Heart left ventricle (tissue), 16 donors: ENCODE measurements at regions of chr1 and their contacts with region 1.

Region 1: DNA sequence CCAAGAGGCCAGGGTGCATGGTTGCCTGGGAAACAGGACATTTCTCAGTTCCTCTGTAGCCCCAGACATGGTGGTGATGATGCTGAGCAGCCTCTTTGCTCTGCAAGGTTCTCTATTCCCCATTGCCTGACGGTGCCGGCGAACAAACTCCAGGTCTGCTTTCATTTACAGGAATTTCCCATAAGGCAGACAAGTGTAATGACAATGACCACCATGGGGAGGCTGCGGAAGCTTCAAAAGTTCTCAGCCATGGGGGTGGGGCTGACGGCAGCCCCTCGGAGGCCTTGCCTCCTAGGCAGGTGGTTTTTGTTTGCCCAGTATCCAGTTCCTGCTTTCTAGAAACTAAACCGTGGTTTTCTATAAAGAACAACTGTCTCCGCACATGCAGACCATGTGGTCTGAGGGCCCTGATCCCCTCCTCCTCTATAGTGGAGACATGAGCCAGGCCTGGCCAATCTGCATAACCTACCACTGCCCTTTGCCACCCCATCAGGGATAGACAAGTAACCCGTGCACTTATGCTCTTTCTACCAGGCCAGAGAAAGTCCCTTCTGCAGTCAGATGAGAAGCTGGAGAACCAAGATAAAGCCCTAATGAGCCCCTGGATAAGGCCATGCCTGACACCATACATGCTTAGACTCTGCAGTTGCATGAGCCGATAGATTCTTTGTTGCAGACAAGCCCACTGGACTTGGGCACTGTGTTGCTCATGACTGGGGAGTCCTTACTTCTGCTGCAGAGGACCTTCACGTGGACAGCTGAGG is 54.1 kb downstream of the LDLRAD2 start:
- DNase-seq: no peak
- ATAC-seq: no peak
- H3K4me3 ChIP-seq: no peak overlapping the region
- H3K27ac ChIP-seq: peak overlapping the region in 1 of 12 donors; percentile 24
- H3K4me1 ChIP-seq: peaks cover 0 to 16% (median 13%) of the 10 kb centered on the region in 12 donors
- H3K27me3 ChIP-seq: no peaks in the 10 kb centered on the region
- CTCF ChIP-seq: no peak
- POLR2A ChIP-seq: no peak

Region 2: DNA sequence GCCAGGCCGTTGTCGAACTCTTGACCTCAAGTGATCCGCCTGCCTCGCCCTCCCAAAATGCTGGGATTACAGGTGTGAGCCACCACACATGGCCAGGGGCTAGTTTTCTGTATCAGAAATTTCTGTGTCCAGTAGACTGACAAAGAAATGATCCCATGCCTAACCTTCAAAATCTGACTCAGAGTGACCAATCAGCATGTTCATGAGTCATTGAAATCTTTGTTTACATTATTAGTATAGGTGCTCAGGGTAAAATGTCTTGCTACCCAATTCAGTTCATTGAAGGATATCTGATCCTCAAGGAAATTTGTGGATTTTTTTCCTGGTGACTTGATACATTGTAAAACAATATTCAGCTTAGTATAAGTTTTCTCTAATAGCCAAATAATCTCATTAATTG is 65.0 kb before region 1 on chr1:
- intact Hi-C with region 1: no loop called
- DNase-seq: no peak
- ATAC-seq: no peak
- H3K4me3 ChIP-seq: no peak overlapping the region
- H3K27ac ChIP-seq: no peak overlapping the region
- H3K4me1 ChIP-seq: no peaks in the 10 kb centered on the region
- H3K27me3 ChIP-seq: no peaks in the 10 kb centered on the region
- CTCF ChIP-seq: no peak
- POLR2A ChIP-seq: no peak

Region 3: DNA sequence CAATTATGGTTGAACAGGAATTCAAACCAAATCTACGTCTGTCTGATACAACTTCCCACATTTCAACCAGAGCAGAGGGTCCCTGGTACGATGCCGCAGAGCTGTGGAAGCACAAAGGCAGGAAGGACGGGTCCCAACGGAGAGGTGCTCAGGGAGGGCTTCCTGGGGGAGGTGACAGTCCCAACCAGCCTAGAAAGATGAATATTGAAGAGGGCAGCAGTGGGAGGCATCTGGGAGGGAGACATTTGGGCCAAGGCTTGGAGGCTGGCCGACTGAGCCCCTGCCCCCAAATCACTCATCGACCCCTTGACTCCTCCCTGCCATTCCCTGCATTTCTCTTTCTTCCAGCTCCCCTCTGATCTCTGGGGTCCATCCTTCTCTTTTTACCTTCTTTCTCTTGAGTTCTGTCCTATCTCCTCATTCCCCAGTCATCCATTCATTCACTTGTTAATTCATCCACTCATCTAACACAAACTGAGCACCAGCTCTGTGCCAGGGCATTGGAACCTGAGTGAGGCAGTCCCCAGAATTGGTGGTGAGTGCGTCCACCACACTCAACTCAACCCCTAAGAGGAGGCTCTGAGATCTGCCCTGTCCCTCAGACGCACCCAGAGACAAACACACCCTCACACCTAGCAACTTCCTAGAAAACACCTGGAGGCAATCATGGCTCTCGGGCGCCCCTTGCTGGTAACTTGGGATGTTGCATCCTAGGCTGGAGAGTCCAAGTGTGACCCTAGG is 97.5 kb after region 1 on chr1:
- intact Hi-C with region 1: loop called in 4 of 10 experiments (anchors 5 to 10 kb)
- DNase-seq: peak; percentile 65 to 88 (median 70)
- ATAC-seq: peak; percentile 84 to 90 (median 88)
- H3K4me3 ChIP-seq: no peak overlapping the region
- H3K27ac ChIP-seq: no peak overlapping the region
- H3K4me1 ChIP-seq: peaks cover 0 to 23% (median 9%) of the 10 kb centered on the region in 12 donors
- H3K27me3 ChIP-seq: no peaks in the 10 kb centered on the region
- CTCF ChIP-seq: peak; percentile 85 to 95 (median 92)
- POLR2A ChIP-seq: no peak

Region 4: DNA sequence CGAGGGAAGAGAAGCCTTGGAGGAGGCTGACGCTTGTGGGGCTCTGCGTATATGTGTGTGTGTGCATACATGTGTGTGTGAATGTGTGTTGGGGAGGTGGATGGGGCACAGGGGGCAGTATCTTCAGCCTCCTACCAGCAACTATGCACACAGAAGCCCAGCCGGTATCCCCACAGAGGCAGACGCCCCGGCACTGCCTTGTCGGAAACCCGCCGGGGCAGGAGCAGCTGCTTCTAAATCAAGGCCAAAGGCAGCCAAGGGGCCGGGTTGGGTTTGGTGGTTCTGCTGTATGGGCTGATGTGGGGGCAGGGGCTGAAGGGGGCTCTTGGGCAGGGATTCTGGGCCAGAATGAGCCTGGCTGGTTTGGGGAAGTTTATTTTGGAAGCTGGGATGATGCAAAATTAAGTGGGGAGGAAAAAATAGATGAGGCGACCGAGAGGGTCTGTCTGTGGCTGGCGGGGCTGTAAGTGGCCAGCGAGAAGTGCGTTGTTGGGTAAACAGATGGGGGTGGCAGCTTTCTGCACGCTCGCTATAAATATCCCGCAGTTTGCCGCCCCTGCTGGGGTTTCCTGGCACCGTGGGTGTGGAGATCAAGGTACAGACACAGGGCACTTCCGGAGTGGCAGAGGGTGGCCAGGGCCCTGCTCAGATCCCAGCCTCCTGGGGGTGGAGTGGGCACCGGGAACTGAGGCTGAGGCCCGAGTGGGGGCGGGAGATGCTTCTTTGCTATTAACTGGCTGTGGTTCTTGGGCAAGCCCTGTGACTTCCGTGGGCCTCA is 287.7 kb after region 1 on chr1:
- intact Hi-C with region 1: no loop called
- DNase-seq: peak in 1 of 5 donors; percentile 42
- ATAC-seq: no peak
- H3K4me3 ChIP-seq: no peak overlapping the region
- H3K27ac ChIP-seq: no peak overlapping the region
- H3K4me1 ChIP-seq: no peaks in the 10 kb centered on the region
- H3K27me3 ChIP-seq: peaks cover 0 to 7% (median 0%) of the 10 kb centered on the region in 9 donors
- CTCF ChIP-seq: no peak
- POLR2A ChIP-seq: no peak